IMR-90 (cell line): ENCODE measurements at regions of chr3 and their contacts with region 1.

Region 1: GRCh38 chr3:102673271-102674115 is 238.7 kb downstream of the ZPLD1 start:
- DNase-seq: peak; percentile 21
- ATAC-seq: peak; percentile 65
- H3K4me3 ChIP-seq: no peak overlapping the region
- H3K27ac ChIP-seq: no peak overlapping the region
- H3K4me1 ChIP-seq: no peaks in the 10 kb centered on the region
- H3K27me3 ChIP-seq: no peaks in the 10 kb centered on the region; the same call in 1 of the 2 replicates
- CTCF ChIP-seq: peak; percentile 75
- POLR2A ChIP-seq: no peak
- RAD21 ChIP-seq: peak; percentile 66

Region 2: DNA sequence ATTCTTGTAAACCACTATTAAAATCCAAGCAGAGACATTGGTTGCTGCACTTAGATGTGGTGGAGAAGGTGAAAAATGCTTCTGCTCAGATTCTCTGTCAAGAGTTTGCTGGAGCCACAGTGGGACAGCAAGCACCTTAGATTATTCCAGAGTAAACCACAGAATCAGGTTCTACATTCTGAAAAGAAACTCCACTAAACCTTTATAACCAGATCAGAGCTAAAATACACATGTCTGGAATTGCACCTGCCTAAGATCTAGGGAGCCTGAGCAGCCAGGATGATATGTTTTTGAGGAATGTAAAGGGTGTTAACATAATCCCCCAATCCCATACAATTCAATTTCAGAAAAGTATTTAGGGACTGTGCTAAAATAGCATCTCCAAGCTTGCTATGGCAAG is 238.8 kb before region 1 on chr3 and contains the start of gene ZPLD1:
- CTCF ChIA-PET with region 1: no interaction called
- POLR2A ChIA-PET with region 1: no interaction called
- dilution Hi-C with region 1: no loop called
- in situ Hi-C with region 1: no loop called
- intact Hi-C with region 1: no loop called
- DNase-seq: no peak
- ATAC-seq: no peak
- H3K4me3 ChIP-seq: no peak within 1 kb of the TSS
- H3K27ac ChIP-seq: no peak within 1 kb of the TSS
- H3K4me1 ChIP-seq: no peaks in the 10 kb centered on the region
- H3K27me3 ChIP-seq: no peaks in the 10 kb centered on the region
- CTCF ChIP-seq: no peak
- POLR2A ChIP-seq: no peak
- RAD21 ChIP-seq: no peak
- total RNA-seq, gene ZPLD1: under 0.01 TPM in 2 replicates

Region 3: GRCh38 chr3:102687851-102688555 is 14.5 kb after region 1 on chr3:
- CTCF ChIA-PET with region 1: interaction called, 15 read pairs
- POLR2A ChIA-PET with region 1: no interaction called
- dilution Hi-C with region 1: no loop called
- in situ Hi-C with region 1: no loop called
- intact Hi-C with region 1: no loop called
- DNase-seq: no peak
- ATAC-seq: no peak
- H3K4me3 ChIP-seq: no peak overlapping the region
- H3K27ac ChIP-seq: no peak overlapping the region
- H3K4me1 ChIP-seq: no peaks in the 10 kb centered on the region
- H3K27me3 ChIP-seq: no peaks in the 10 kb centered on the region
- CTCF ChIP-seq: no peak
- POLR2A ChIP-seq: no peak
- RAD21 ChIP-seq: no peak